Activated naive CD4-positive, alpha-beta T cell treated with anti-CD3 and anti-CD28 coated beads for 36 hours (primary cell): ENCODE measurements at regions of chr4 and their contacts with region 1.

Region 1: DNA sequence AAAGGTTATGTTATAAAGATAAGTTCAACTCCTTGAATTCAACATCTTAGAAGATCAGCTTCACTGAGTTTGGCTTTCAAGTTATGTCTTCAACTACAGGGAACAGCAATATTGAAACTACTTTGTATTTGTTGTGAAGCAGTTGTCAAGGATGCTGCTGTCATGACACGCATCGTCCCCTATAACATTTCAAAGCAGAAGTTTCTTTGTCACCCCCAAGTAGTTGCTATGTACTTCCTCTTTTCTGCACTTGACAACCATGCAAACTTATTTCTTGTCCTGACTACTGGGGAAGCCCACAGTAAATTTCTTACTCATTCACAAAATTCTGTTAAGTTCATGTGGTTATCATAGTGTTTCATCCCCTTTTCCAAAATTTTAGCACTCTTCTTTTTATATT is 14.3 kb downstream of the ANTXR2 start:
- DNase-seq: peak; percentile 67
- H3K4me3 Mint-ChIP-seq: peak overlapping the region; percentile 71
- H3K27ac Mint-ChIP-seq: peak overlapping the region; percentile 86
- H3K4me1 Mint-ChIP-seq: peaks cover 42% of the 10 kb centered on the region
- H3K27me3 Mint-ChIP-seq: no peaks in the 10 kb centered on the region

Region 2: DNA sequence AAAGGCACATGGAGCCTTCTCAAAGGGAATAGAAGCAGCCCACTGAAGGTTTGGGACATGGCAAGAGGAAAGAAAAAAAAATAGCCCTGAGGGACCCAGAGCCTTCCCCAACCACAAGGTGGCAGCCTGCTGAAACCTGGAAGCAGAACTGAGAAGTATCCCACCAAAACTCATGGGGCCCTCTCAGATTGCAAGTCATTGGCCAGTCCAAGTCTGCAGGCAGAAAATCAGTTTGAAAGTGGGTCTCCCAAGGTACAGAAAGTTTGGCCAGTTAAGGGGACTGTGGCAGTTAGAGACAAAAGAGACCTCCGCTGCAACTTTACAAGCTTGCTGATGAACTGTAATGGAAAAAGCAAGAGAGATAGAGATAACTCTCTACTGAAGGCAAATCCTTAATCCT is 141.5 kb before region 1 on chr4:
- CTCF ChIA-PET with region 1: no interaction called
- intact Hi-C with region 1: loop called (anchors 5 kb)
- DNase-seq: peak; percentile 67
- H3K4me3 Mint-ChIP-seq: no peak overlapping the region
- H3K27ac Mint-ChIP-seq: no peak overlapping the region
- H3K4me1 Mint-ChIP-seq: peaks cover 2% of the 10 kb centered on the region
- H3K27me3 Mint-ChIP-seq: no peaks in the 10 kb centered on the region

Region 3: DNA sequence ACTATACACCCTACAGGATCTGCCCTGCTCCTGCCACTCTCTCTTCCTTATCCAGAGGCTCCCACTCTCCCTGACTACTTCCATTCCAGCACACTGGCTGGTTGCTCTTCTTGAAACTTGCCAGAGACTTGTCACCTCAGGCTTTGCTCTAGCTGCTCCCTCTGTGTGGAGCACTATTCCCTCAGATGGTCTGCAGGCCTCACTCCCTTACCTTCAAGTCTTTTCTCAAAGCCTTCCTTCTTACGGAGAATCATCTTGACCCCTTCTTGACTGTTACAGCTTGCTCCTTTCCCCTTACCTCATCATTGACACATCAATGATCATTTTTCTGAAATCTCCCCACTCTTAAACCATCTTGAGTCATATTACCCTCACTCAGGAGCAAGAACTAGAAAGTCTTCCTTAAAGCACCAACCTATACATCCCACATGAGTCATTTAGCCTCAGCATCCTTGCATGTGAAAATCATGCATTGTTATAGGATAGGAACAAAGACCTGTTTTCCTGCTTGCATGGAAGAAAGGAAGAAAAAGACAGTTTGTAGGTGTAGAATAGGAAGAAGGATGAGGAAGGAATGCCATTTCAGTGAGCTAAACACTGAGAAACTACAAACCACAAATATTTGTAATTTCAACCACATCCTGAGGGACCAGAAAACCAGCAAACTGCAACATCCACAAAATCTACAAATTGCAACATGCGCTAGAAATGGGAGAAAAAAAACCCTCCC is 41.5 kb before region 1 on chr4:
- CTCF ChIA-PET with region 1: no interaction called
- intact Hi-C with region 1: loop called (anchors 1 kb)
- DNase-seq: no peak
- H3K4me3 Mint-ChIP-seq: no peak overlapping the region
- H3K27ac Mint-ChIP-seq: no peak overlapping the region
- H3K4me1 Mint-ChIP-seq: no peaks in the 10 kb centered on the region
- H3K27me3 Mint-ChIP-seq: no peaks in the 10 kb centered on the region

Region 4: DNA sequence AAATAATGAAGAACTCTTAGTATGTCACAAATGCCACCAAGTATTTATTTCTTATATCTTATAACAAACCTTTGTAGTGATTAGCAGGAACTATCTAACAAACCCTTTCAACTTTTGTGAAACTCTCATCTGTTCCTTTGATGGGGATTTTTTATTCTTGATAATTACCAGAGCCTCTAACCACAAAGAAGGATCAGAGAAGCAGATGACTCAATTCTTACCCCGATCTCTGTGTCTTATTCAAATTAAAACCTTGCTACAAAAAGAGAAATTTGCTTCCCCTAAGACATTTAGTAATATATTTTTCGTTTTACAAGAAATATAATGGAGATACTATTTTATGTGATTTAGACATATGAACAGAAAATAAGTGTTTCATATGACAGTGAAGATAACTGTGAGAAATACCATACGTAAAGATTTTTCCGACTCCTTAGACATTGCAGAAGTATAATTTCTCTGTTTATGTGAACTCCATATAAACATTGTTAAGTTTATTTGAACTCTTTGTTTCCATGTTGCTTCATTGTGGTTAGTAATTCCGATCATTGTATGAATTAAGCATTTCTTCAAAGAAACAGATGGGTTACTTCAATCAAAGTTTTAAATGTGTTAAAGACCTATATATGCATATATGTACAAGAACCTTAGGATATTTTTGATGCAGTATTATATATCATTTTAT is 482.2 kb after region 1 on chr4:
- CTCF ChIA-PET with region 1: no interaction called
- intact Hi-C with region 1: loop called (anchors 2 kb)
- DNase-seq: no peak
- H3K4me3 Mint-ChIP-seq: no peak overlapping the region
- H3K27ac Mint-ChIP-seq: peak overlapping the region; percentile 41
- H3K4me1 Mint-ChIP-seq: peaks cover 48% of the 10 kb centered on the region
- H3K27me3 Mint-ChIP-seq: peaks cover 34% of the 10 kb centered on the region

Region 5: GRCh38 chr4:80798082-80798481 is 739.3 kb after region 1 on chr4:
- CTCF ChIA-PET with region 1: no interaction called
- intact Hi-C with region 1: no loop called
- DNase-seq: peak; percentile 5
- H3K4me3 Mint-ChIP-seq: no peak overlapping the region
- H3K27ac Mint-ChIP-seq: no peak overlapping the region
- H3K4me1 Mint-ChIP-seq: peaks cover 1% of the 10 kb centered on the region
- H3K27me3 Mint-ChIP-seq: no peaks in the 10 kb centered on the region